ENCODE measurements at regions of chr12 and their contacts with region 1.

Region 1: DNA sequence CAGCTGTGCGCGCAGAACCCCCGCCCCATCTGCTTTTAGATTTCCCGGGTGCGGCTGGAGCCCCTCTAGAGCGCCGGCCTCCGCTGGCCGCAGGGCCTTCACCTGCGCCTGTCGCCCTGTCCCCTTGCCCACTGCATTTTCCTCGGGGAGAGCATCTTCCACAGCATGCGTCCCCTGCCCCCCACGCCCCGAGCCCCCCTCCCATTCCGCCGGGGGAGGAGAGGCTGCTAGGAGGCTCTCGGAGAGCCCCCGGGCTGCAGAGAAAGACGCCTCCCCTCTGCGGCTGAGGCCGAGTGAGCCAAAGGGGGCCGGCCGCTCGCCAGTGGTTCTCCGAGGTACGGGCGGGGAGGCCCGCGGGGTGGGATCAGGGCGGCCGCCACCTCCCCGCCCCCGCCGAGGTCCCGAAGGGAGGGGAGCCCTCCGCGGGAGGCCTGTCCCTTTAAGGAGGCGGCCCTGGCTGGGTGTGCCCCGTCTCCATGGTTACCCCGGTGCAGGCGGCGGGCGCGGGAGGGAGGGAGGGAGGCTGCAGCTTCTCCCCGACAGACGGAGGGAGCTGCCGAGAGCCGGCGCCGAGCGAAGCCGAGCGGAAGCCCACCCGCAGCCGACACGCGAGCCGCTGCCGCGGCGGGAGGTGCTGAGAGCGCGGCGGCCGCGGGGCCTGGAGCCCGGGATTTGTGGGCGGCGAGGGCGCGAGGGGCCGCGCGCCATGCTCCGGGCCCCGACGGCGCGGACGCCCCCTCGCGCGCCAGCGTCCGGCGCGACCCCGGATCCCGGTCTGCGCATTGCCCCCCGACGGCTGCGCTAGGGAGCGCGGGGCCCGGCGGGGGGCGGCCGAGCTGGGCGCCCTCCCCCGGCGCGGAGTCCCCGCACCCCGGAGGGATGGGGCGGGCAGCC is at the start of gene KCNH3:
- DNase-seq: no peak
- ATAC-seq: peak; percentile 77
- H3K4me3 ChIP-seq: peak within 1 kb of the TSS; percentile 35 to 55
- H3K27ac ChIP-seq: no peak within 1 kb of the TSS
- H3K4me1 ChIP-seq: peaks cover 7% of the 10 kb centered on the region
- H3K27me3 ChIP-seq: peaks cover 7% of the 10 kb centered on the region; the same call in 1 of the 2 replicates
- CTCF ChIP-seq: no peak
- total RNA-seq, gene KCNH3: 0.64 TPM

Region 2: GRCh38 chr12:49366652-49367380 is 171.9 kb before region 1 on chr12:
- CTCF ChIA-PET with region 1: no interaction called
- POLR2A ChIA-PET with region 1: interaction called, 11 read pairs
- in situ Hi-C with region 1: no loop called
- intact Hi-C with region 1: no loop called
- DNase-seq: no peak
- ATAC-seq: peak; percentile 94
- H3K4me3 ChIP-seq: peak overlapping the region; percentile 78 to 82
- H3K27ac ChIP-seq: peak overlapping the region; percentile 92
- H3K4me1 ChIP-seq: peaks cover 18% of the 10 kb centered on the region
- H3K27me3 ChIP-seq: no peaks in the 10 kb centered on the region
- CTCF ChIP-seq: peak; percentile 44; the same call in 1 of the 2 replicates

Region 3: DNA sequence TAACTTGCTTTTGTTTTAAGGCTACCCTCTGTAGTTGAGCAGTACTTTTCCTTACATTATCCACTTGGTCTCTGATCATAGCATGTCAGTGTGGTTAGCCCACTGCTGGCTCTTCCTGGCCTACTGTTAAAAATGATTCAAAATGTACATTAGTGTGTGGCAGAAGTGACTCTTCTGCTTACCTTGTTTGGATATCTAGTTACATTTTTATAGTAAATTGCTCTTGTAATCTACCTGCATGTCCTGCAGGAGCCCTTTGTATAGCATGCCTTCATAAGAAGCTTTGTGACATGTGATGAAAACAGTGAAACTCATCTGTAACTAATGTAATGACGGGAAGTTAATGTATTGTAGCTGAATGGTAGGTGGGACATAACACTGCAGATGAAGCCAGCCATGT is 163.4 kb before region 1 on chr12:
- CTCF ChIA-PET with region 1: interaction called, 10 read pairs
- POLR2A ChIA-PET with region 1: no interaction called
- in situ Hi-C with region 1: no loop called
- intact Hi-C with region 1: no loop called
- DNase-seq: no peak
- ATAC-seq: no peak; the same call in 1 of the 2 replicates
- H3K4me3 ChIP-seq: no peak overlapping the region
- H3K27ac ChIP-seq: no peak overlapping the region
- H3K4me1 ChIP-seq: no peaks in the 10 kb centered on the region
- H3K27me3 ChIP-seq: no peaks in the 10 kb centered on the region
- CTCF ChIP-seq: no peak

Region 4: GRCh38 chr12:49440035-49440434 is 98.7 kb before region 1 on chr12:
- CTCF ChIA-PET with region 1: no interaction called
- POLR2A ChIA-PET with region 1: no interaction called
- in situ Hi-C with region 1: no loop called
- intact Hi-C with region 1: no loop called
- DNase-seq: no peak
- ATAC-seq: no peak
- H3K4me3 ChIP-seq: no peak overlapping the region
- H3K27ac ChIP-seq: no peak overlapping the region
- H3K4me1 ChIP-seq: peaks cover 3% of the 10 kb centered on the region; the same call in 1 of the 2 replicates
- H3K27me3 ChIP-seq: no peaks in the 10 kb centered on the region
- CTCF ChIP-seq: no peak

Region 5: DNA sequence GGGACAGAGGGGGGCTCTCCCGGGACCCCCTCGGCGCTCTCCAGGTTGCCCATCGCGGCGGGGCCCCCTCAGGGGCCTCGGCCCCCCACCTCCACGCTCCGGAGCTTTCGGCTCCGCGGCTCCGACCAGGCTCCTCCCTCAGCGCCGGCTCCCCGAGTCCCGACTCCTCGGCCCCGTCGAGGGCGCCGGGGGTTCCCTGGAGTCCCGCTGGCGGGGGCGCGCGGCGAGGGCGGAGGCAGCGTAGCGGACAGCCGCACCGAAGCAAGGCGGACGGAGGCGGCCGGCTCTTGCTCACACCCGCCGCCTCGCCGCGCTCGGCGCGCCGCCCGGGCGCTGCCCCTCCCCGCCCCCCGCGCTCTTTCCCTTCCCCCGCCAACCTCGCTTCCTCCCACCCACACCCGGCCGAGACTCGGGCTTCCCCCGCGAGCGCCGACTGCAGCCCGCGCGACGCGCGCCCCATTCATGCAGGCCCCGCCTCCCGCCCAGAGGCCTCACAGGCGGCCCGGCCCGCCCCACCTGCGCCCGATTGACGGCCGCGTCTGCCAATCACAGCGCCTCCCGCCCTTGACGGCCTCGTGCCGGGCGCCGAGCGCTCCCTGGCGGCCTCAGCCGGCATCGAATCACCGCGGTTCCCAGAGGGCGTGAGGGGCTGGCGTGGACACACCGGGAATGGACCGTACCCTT is 168.5 kb after region 1 on chr12 and contains the start of gene FMNL3:
- CTCF ChIA-PET with region 1: no interaction called
- POLR2A ChIA-PET with region 1: no interaction called
- in situ Hi-C with region 1: no loop called
- intact Hi-C with region 1: no loop called
- DNase-seq: peak; percentile 46
- ATAC-seq: peak; percentile 97
- H3K4me3 ChIP-seq: peak within 1 kb of the TSS; percentile 75 to 79
- H3K27ac ChIP-seq: peak within 1 kb of the TSS; percentile 80
- H3K4me1 ChIP-seq: peaks cover 16% of the 10 kb centered on the region
- H3K27me3 ChIP-seq: peaks cover 8% of the 10 kb centered on the region; the same call in 1 of the 2 replicates
- CTCF ChIP-seq: peak; percentile 98
- total RNA-seq, gene FMNL3: 25.7 TPM